Activated naive CD4-positive, alpha-beta T cell treated with anti-CD3 and anti-CD28 coated beads for 36 hours (primary cell): ENCODE measurements at regions of chr2 and their contacts with region 1.

Region 1: DNA sequence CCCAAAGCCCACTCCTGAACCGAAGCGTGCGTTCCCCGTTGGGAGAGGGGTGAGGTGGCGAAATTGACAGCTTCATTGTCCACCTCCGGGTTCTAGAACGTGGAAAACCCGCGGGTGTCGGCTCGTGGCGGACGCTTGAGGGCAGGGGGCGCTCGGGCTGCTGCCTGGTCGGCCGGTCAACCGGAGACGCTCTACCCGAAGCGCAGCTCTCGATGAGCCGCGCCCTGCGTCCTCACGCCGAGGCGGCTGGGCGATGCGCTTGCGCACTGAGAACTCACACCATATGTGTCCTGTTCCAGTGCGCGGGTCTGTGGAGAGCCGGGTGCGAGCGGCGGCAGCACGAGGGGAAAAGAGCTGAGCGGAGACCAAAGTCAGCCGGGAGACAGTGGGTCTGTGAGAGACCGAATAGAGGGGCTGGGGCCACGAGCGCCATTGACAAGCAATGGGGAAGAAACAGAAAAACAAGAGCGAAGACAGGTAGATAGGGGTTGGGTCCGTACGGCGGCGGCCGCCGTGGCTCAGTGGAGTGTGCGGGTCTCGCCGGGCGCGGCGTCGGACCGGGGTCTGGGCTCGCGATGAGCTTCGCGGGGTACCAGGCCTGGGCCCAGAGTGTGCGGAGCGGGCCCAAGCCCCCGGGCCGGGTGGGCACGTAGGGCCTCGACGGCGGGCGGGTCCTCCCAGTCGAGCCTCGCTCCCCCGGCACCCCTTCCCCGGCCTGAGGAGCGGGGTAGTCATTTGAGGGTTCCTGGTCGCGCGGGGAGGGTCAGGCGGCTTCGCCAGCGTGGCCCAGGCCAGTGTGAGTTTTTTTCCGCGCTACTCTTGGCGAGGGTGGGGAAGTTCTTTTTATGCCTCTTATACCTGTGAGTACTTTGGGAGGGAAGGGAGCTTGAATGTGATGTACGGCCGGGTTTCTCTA is at the start of gene EIF5B:
- DNase-seq: peak; percentile 92
- H3K4me3 Mint-ChIP-seq: no peak within 1 kb of the TSS
- H3K27ac Mint-ChIP-seq: no peak within 1 kb of the TSS
- H3K4me1 Mint-ChIP-seq: peaks cover 49% of the 10 kb centered on the region
- H3K27me3 Mint-ChIP-seq: no peaks in the 10 kb centered on the region
- total RNA-seq, gene EIF5B: 70.2 to 71.1 TPM

Region 2: DNA sequence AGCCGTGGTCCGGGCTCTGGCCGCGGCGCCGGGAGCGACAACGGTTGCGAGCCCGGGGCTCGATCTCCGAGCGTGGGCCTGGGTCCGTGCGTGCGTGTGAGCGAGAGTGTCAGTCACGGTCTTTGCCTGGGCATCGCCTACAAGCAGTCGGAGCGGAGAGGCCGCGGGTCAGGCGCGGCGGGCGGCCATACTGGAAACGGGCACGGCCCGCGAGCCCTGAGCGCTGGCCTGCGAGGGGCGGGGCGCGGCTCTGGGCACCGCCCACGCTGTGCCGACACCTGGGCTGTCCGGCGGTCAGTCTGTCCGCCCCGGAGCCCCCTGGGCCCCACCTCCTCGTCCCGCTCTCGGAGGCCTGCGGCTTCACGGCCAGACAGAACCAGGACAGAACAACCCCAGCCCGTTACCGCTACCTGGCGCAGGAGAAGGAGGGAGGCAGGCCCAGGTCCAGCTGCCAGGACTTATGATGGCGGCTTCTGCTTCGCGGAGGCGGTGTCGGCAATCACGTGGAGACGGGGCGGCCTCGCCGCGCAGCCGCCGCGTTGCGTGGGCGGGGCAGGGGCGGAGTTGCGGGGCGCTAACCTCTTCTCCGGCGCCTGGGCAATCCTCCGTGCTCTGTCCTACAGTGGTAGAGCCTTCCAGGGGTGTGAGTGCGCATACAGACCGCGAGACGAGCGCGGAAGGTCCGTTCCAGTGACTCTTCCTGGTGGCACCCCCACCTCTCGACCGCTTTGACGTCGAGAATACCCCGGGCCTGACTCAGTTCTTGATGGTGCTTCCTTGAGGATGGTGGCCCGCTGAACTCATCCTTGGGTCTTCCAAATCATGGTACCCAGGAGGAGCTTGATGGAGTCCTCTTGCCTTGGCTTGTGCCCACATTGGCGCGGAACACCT is 1341.4 kb before region 1 on chr2 and contains the start of gene TMEM131:
- CTCF ChIA-PET with region 1: no interaction called
- intact Hi-C with region 1: loop called (anchors 5 kb)
- DNase-seq: peak; percentile 96
- H3K4me3 Mint-ChIP-seq: peak within 1 kb of the TSS; percentile 95
- H3K27ac Mint-ChIP-seq: peak within 1 kb of the TSS; percentile 93
- H3K4me1 Mint-ChIP-seq: peaks cover 32% of the 10 kb centered on the region
- H3K27me3 Mint-ChIP-seq: no peaks in the 10 kb centered on the region
- total RNA-seq, gene TMEM131: 18.5 to 19.2 TPM

Region 3: GRCh38 chr2:99141110-99142108 is 196.0 kb before region 1 on chr2 and contains the start of gene C2orf15:
- CTCF ChIA-PET with region 1: no interaction called
- intact Hi-C with region 1: loop called (anchors 1 kb)
- DNase-seq: peak; percentile 96
- H3K4me3 Mint-ChIP-seq: peak within 1 kb of the TSS; percentile 93
- H3K27ac Mint-ChIP-seq: peak within 1 kb of the TSS; percentile 86
- H3K4me1 Mint-ChIP-seq: peaks cover 17% of the 10 kb centered on the region
- H3K27me3 Mint-ChIP-seq: no peaks in the 10 kb centered on the region
- total RNA-seq, gene C2orf15: 1.4 to 1.6 TPM

Region 4: GRCh38 chr2:99348173-99348572 is 10.8 kb after region 1 on chr2:
- CTCF ChIA-PET with region 1: interaction called, 9 read pairs
- intact Hi-C with region 1: loop called (anchors 1 kb)
- DNase-seq: peak; percentile 52
- H3K4me3 Mint-ChIP-seq: no peak overlapping the region
- H3K27ac Mint-ChIP-seq: peak overlapping the region; percentile 87
- H3K4me1 Mint-ChIP-seq: peaks cover 67% of the 10 kb centered on the region
- H3K27me3 Mint-ChIP-seq: no peaks in the 10 kb centered on the region

Region 5: DNA sequence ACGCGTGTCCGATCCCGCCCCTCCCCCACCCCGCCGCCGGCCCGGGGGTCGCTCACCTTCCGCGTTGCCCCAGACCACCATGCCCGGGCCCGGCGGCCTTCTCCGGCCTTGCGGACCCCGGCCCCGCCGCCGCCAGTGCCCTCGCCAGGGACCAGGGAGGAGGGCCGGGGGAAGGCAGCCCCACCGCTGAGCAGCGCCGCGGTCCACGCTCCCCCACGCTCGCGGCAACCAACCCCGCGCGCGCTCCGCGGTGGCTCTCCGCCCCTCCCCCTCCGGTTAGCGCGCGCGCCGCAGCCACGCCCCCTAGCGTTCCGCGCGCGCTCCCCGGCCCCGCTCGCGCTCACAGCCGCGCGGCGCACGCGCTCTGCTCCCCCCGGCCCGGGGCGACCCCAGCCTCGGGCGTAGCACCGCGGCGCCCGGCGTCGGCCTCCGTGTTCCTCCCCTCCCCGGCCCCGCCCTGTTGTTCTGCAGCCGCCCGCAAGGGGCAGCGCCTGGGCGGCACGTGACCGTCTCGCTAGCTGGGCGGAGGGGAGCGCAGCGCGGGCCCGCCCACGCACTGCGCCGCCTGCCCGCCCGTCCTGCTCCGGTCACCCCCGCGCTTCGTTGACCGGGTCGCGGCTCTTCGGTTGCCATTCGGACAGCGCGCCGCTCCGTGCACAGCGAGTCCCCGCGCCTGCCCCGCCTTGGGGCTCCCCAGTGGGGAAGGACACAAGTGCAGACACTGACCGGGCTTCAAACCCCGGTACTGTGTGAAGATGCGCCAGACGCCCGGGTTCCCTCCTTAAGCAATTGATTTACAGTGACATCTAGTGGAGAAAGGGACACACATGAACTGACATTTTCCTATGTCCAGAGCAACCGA is 152.6 kb after region 1 on chr2 and contains the start of gene REV1:
- CTCF ChIA-PET with region 1: interaction called, 4 read pairs
- intact Hi-C with region 1: loop called (anchors 1 kb)
- DNase-seq: peak; percentile 94
- H3K4me3 Mint-ChIP-seq: peak within 1 kb of the TSS; percentile 87
- H3K27ac Mint-ChIP-seq: peak within 1 kb of the TSS; percentile 92
- H3K4me1 Mint-ChIP-seq: peaks cover 37% of the 10 kb centered on the region
- H3K27me3 Mint-ChIP-seq: no peaks in the 10 kb centered on the region
- total RNA-seq, gene REV1: 29.6 to 32.3 TPM